Astrocyte of the cerebellum (primary cell): ENCODE measurements at regions of chr16 and their contacts with region 1.

Region 1: DNA sequence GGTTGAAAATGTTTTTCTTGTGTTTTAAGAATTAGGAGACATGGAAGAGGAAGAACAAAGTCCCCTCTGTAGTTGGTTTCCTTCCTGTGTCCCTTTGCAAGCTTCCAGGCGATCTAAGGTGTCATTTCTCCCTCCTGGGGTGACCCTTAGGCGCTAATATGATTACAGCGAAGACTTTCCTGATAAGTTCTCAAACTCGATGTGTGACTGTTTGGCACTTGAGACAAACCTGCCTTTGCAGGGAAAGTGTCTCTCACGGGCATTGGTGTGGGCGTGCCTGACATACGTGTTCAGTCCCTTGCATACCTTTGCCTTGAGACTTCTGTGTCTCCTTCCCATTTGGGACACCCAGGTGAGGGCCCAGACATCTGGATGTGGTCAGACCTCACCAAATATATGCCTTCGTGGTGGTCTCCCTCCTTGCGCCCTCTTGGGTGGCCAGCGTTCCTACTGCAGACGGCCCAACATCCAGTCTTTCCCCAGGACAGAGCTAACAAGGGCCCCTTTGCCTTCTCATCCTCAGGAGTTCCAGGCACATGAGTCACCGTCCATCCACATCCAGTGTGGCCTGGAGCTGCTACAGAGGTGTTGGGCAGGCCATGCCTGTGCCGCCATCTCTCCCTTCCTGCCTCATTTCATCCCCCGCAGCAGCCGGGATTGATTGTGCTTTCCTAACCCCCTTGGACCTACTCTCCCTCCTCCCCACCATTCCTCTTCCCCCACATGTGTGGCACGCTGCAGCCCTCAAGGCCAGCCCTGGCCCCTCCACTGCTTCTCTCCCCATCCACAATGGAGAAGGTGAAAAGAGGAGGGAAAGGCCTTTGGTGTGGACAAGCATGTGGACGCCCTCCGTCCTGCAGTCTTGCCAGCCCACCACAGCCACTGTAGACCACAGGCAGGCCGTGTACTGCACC is 3.1 kb upstream of the JPT2 start:
- DNase-seq: no peak
- H3K4me3 ChIP-seq: no peak overlapping the region
- CTCF ChIP-seq: no peak

Region 2: DNA sequence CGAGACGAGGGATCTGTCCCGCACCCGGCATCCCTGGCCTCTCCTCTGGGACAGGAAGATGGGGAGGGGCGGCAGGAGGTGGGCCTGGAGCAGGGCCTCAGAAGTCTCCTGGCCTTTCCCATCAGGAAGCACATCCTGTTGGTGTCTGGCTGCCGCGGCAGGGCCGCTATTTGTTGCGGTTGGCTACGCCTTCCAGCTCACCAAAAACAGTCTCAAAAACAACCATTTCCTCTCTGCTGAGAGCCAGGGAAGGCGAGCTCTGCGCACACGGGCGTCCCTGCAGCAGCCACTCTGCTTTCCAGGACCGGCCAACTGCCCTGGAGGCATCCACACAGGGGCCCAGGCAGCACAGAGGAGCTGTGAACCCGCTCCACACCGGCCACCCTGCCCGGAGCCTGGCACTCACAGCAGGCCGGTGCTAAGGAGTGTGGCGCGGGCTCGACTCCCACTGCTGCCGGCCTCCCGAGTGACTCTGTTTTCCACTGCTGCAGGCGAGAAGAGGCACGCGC is 141.5 kb before region 1 on chr16 and contains the start of gene TMEM204:
- in situ Hi-C with region 1: no loop called
- DNase-seq: no peak
- H3K4me3 ChIP-seq: no peak within 1 kb of the TSS
- CTCF ChIP-seq: no peak

Region 3: GRCh38 chr16:1620391-1620790 is 54.6 kb before region 1 on chr16:
- in situ Hi-C with region 1: no loop called
- DNase-seq: no peak
- H3K4me3 ChIP-seq: no peak overlapping the region
- CTCF ChIP-seq: no peak

Region 4: DNA sequence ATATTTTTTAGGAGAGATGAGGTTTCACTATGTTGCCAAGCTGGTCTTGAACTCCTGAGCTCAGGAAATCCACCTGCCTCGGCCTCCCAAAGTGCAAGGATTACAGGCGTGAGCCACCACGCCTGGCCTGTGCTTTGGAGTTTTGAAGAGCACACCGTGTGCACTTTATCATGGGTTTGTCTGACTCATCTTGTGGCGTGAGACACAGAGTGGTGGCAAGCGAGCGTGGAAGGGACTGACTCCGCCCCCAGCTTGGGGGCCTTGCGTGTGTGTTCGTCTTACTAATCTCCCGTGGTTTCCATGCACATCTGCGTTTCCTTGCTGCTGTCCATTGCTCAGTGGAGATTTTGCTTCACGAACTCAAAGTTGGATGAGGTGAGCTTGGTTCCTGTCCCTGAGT is 39.9 kb before region 1 on chr16:
- in situ Hi-C with region 1: loop called (anchors 5 kb)
- DNase-seq: no peak
- H3K4me3 ChIP-seq: no peak overlapping the region
- CTCF ChIP-seq: no peak

Region 5: DNA sequence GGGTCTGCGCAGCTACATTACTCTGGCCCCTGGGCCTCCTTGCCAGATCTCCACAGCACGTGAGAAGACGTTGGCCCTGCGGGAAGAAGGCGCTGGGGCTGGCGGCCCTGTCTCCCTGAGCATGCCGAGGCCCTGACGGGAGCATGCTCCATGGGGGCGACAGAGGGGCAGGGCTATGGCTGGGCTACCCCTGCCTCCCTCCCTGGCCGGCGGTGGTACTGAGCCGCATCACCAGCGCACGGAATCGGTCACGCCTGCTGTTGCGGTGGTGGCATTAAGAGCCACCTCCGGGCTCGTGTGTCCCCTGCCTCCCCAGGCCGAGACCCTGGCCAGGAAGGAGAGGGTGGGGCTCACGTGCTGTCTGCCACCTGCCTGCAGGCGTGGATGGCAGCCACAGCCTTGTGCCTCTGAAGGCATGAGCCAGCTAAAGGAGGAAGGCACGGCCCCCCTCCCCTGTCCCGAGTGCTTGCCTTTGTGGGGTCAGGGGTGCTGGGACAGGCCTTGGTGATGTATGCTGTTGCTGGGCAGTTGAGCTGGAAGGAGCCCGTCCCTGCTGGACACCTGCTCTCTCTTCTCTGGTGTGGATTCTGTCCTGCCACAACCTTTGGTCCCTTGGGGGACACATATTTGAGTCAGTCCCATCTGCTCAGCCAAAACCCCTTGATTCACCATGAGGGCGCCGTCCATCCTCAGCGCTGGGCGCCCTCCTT is 59.3 kb after region 1 on chr16:
- in situ Hi-C with region 1: no loop called
- DNase-seq: no peak
- H3K4me3 ChIP-seq: no peak overlapping the region
- CTCF ChIP-seq: no peak